B cell (primary cell): ENCODE measurements at regions of chr10 and their contacts with region 1.

Region 1: DNA sequence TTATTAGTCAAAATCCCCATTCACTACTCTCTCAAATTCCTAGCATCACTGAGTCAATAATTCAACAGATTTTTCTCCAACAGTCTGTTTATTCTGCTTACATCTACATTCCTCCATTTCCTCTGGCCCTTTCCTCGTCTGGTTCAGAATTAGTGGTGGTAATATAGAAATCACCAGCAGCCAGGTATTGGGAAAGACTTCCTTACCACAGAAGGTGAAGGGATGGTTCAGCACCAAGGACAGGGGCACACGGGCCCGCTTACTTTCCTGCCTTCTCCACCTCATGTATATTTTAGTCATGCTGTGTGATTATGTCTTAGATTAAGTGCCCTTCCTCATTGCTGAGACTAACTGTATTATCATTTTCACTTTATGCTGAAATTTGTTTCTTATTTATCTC is 70.4 kb upstream of the APBB1IP start:
- DNase-seq: peak; percentile 59
- ATAC-seq: peak; percentile 75
- H3K4me3 ChIP-seq: no peak overlapping the region
- H3K4me3 Mint-ChIP-seq: peak overlapping the region; percentile 42
- H3K27ac ChIP-seq: no peak overlapping the region
- H3K27ac Mint-ChIP-seq: no peak overlapping the region
- H3K4me1 ChIP-seq: peaks cover 4 to 6% of the 10 kb centered on the region in 2 donors
- H3K4me1 Mint-ChIP-seq: peaks cover 12% of the 10 kb centered on the region
- H3K27me3 ChIP-seq: peaks cover 0 to 2% (median 0%) of the 10 kb centered on the region in 4 experiments
- H3K27me3 Mint-ChIP-seq: peaks cover under 1% of the 10 kb centered on the region
- CTCF ChIP-seq: no peak

Region 2: GRCh38 chr10:26457088-26457487 is 89.3 kb after region 1 on chr10:
- CTCF ChIA-PET with region 1: no interaction called
- POLR2A ChIA-PET with region 1: no interaction called
- intact Hi-C with region 1: loop called (anchors 5 kb)
- DNase-seq: peak; percentile 76
- ATAC-seq: peak; percentile 94
- H3K4me3 ChIP-seq: peak overlapping the region in 1 of 5 experiments; percentile 26
- H3K4me3 Mint-ChIP-seq: peak overlapping the region; percentile 82
- H3K27ac ChIP-seq: peak overlapping the region; percentile 78 to 85
- H3K27ac Mint-ChIP-seq: peak overlapping the region; percentile 97
- H3K4me1 ChIP-seq: peaks cover 51 to 54% of the 10 kb centered on the region in 2 donors
- H3K4me1 Mint-ChIP-seq: peaks cover 71% of the 10 kb centered on the region
- H3K27me3 ChIP-seq: no peaks in the 10 kb centered on the region
- H3K27me3 Mint-ChIP-seq: no peaks in the 10 kb centered on the region
- CTCF ChIP-seq: no peak